K562 (cell line): ENCODE measurements at regions of chr5 and their contacts with region 1.

Region 1: GRCh38 chr5:64768358-64769312 is at the starts of genes CWC27 and SREK1IP1:
- DNase-seq: peak; percentile 63 to 91 (median 74)
- ATAC-seq: peak; percentile 95
- H3K4me3 ChIP-seq: peak within 1 kb of the TSS; percentile 79
- H3K27ac ChIP-seq: peak within 1 kb of the TSS; percentile 97
- H3K4me1 ChIP-seq: peaks cover 0 to 14% of the 10 kb centered on the region in 2 experiments; a peak in 3 of 5 replicates
- H3K27me3 ChIP-seq: no peaks in the 10 kb centered on the region
- CTCF ChIP-seq: no peak
- EP300 ChIP-seq: no peak
- POLR2A ChIP-seq: peak; percentile 88
- RAD21 ChIP-seq: no peak
- polyA plus RNA-seq, gene CWC27: 42.9 to 49.3 TPM
- polyA plus RNA-seq, gene SREK1IP1: 29.8 to 45.2 TPM

Region 2: DNA sequence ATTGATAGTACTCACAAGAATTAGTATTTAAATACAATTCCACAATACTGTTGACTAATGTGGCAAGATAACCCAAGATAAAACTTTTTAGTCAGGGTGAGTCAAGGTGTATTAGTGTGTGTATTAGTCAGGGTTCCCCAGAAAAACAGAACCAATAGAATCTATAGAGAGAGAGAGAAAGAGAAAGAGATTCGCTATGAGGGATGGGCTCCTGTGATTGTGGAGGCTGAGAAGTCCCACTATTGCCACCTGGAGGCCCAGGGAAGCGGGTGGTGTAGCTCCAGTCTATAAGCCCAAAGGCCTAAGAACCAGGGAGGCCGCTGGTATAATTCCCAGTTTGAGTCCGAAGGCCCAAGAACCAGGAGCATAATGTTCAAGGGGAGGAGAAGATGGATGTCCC is 88.3 kb before region 1 on chr5:
- CTCF ChIA-PET with region 1: no interaction called
- POLR2A ChIA-PET with region 1: no interaction called
- in situ Hi-C with region 1: no loop called
- intact Hi-C with region 1: loop called (anchors 5 kb)
- DNase-seq: peak in 1 of 4 experiments; percentile 22
- ATAC-seq: peak; percentile 78
- H3K4me3 ChIP-seq: no peak overlapping the region
- H3K27ac ChIP-seq: no peak overlapping the region
- H3K4me1 ChIP-seq: no peaks in the 10 kb centered on the region
- H3K27me3 ChIP-seq: peaks cover 3 to 4% of the 10 kb centered on the region in 2 experiments; a peak in 1 of 5 replicates
- CTCF ChIP-seq: peak; percentile 25 to 33 (median 28); a peak in 3 of 6 replicates
- EP300 ChIP-seq: no peak
- POLR2A ChIP-seq: no peak
- RAD21 ChIP-seq: peak in 1 of 2 experiments; percentile 21; a peak in 1 of 4 replicates

Region 3: DNA sequence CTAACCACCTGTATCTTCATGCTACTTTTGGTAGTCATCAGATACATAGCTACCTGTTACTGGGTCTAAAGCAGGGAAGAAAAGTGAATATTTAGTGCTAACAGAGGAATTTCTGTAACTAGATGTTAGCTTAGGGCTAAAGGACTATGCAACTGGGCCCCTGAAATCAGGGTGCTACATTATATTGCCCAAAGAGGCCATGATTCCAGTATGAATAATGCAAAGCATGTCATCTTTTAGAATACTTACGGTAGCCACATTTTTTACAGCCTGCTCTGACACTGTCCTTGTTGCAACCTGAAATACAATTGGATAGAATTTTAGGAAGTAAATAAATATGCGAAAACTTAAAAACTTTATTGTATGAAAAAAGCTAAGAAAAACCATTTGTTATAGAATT is 14.6 kb before region 1 on chr5:
- CTCF ChIA-PET with region 1: no interaction called
- POLR2A ChIA-PET with region 1: interaction called, 11 read pairs
- in situ Hi-C with region 1: no loop called
- intact Hi-C with region 1: no loop called
- DNase-seq: no peak
- ATAC-seq: no peak
- H3K4me3 ChIP-seq: no peak overlapping the region
- H3K27ac ChIP-seq: no peak overlapping the region
- H3K4me1 ChIP-seq: no peaks in the 10 kb centered on the region
- H3K27me3 ChIP-seq: no peaks in the 10 kb centered on the region
- CTCF ChIP-seq: no peak
- EP300 ChIP-seq: no peak
- POLR2A ChIP-seq: no peak
- RAD21 ChIP-seq: no peak

Region 4: GRCh38 chr5:64900618-64901017 is 132.0 kb after region 1 on chr5:
- CTCF ChIA-PET with region 1: no interaction called
- POLR2A ChIA-PET with region 1: no interaction called
- in situ Hi-C with region 1: no loop called
- intact Hi-C with region 1: no loop called
- DNase-seq: no peak
- ATAC-seq: no peak
- H3K4me3 ChIP-seq: no peak overlapping the region
- H3K27ac ChIP-seq: no peak overlapping the region
- H3K4me1 ChIP-seq: no peaks in the 10 kb centered on the region
- H3K27me3 ChIP-seq: no peaks in the 10 kb centered on the region
- CTCF ChIP-seq: no peak
- EP300 ChIP-seq: no peak
- POLR2A ChIP-seq: no peak
- RAD21 ChIP-seq: no peak